CD4-positive, alpha-beta memory T cell (primary cell): ENCODE measurements at regions of chr6 and their contacts with region 1.

Region 1: DNA sequence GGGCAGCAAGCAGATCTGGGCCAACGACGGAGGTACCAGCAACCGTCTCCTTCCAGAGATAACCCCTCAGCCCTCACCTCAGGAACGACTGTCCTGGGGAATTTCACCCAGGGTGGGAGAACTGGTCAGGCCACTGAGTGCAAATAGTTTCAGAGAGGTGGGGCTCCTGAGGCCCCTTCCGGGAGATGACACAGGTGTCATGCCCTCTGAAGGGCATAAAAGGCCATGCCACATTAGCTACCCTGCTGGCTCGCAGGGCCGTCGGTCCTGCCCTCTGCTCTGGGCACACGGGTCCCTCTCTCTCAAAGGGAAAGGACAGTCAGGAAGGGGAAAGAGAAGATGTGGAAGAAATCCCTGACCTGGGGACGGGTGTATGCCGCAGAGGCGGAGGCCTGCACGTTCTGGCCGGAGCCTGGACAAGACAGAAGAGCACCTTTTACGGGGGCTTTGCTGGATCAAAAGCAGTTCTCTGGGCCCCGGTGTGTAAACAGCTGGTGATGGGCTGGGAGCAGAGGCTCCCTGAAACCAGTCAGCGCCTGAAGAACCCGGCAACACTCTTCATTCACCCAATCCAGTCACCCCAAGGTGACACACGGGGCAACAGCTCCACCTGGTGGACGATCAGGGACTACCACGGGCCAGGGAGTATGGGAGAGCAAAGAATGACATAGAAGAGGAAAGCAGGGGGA is 6.4 kb upstream of the TAF8 start:
- DNase-seq: peak; percentile 86 to 90 (median 89)
- H3K4me3 ChIP-seq: peak overlapping the region in 1 of 2 donors; percentile 49
- H3K4me3 Mint-ChIP-seq: peak overlapping the region; percentile 81 to 97 (median 86)
- H3K27ac ChIP-seq: peak overlapping the region; percentile 57
- H3K27ac Mint-ChIP-seq: peak overlapping the region; percentile 57 to 98 (median 90)
- H3K4me1 ChIP-seq: peaks cover 76% of the 10 kb centered on the region
- H3K4me1 Mint-ChIP-seq: peaks cover 42 to 92% (median 62%) of the 10 kb centered on the region in 4 donors
- H3K27me3 ChIP-seq: no peaks in the 10 kb centered on the region
- H3K27me3 Mint-ChIP-seq: no peaks in the 10 kb centered on the region

Region 2: GRCh38 chr6:41787219-41787917 is 256.6 kb before region 1 on chr6 and contains the start of gene TOMM6:
- CTCF ChIA-PET with region 1: interaction called, 178 read pairs
- POLR2A ChIA-PET with region 1: interaction called, 126 read pairs
- intact Hi-C with region 1: loop called (anchors 1 kb)
- DNase-seq: peak; percentile 93 to 95 (median 94)
- H3K4me3 ChIP-seq: peak within 1 kb of the TSS; percentile 84 to 100
- H3K4me3 Mint-ChIP-seq: peak within 1 kb of the TSS; percentile 95 to 99 (median 98)
- H3K27ac ChIP-seq: peak within 1 kb of the TSS; percentile 90
- H3K27ac Mint-ChIP-seq: peak within 1 kb of the TSS; percentile 92 to 98 (median 98)
- H3K4me1 ChIP-seq: peaks cover 16% of the 10 kb centered on the region
- H3K4me1 Mint-ChIP-seq: peaks cover 7 to 29% (median 12%) of the 10 kb centered on the region in 4 donors
- H3K27me3 ChIP-seq: no peaks in the 10 kb centered on the region
- H3K27me3 Mint-ChIP-seq: peaks cover 0 to 3% of the 10 kb centered on the region in 2 donors
- total RNA-seq, gene TOMM6: 118 to 126 TPM

Region 3: DNA sequence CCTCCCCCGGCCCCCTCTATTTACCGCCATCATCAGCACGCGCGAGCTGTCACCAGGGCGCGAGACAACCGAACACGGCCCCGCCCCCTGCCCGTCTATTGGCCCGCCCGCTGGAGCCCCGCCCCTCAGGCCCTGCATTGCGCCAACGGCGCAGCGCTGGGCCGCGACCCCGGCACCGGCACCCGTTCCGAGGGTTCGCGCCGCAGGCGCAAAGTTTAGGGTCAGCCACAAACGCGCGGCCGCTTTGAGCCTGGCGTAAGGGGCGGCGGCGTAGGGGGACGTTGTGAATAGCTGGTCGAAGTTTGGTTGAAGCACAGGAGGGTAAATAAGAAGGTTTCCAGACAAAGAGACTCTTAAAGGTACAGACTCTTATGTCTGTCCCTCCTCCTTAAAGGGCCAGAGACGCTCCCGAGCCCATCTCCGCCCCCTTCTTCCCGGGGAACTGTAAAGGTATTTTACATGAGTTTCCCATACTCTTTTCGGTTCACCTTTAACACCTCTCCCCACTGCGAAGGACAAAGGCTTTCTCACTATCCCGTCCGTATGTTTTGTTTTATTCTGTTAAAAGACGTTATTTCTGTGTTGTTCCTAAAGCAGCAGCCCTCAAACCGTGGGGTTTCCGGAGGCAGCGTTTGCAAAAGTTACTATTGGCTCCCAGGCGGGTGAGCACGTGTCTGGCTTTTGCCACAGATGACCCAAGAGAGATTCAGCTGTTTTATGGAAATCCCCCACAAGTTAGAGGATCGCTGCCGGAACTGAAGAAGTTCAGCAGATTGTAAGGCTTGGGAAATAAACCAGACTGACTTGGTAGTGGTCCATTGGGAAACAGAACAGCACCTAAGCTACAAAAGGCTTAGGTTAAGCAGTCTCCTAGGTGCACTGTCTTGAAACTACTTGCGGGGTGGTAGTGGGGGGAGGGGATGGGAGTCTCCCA is 148.4 kb before region 1 on chr6 and contains the start of gene USP49:
- CTCF ChIA-PET with region 1: interaction called, 27 read pairs
- POLR2A ChIA-PET with region 1: interaction called, 24 read pairs
- intact Hi-C with region 1: loop called (anchors 2 kb)
- DNase-seq: peak; percentile 86 to 92 (median 88)
- H3K4me3 ChIP-seq: peak within 1 kb of the TSS; percentile 74 to 91
- H3K4me3 Mint-ChIP-seq: peak within 1 kb of the TSS in 2 of 8 donors; percentile 90 to 98
- H3K27ac ChIP-seq: peak within 1 kb of the TSS; percentile 77
- H3K27ac Mint-ChIP-seq: peak within 1 kb of the TSS in 6 of 7 donors; percentile 79 to 94 (median 90)
- H3K4me1 ChIP-seq: peaks cover 23% of the 10 kb centered on the region
- H3K4me1 Mint-ChIP-seq: peaks cover 9 to 12% (median 10%) of the 10 kb centered on the region in 4 donors
- H3K27me3 ChIP-seq: no peaks in the 10 kb centered on the region
- H3K27me3 Mint-ChIP-seq: no peaks in the 10 kb centered on the region
- total RNA-seq, gene USP49: 1.8 to 2.4 TPM

Region 4: DNA sequence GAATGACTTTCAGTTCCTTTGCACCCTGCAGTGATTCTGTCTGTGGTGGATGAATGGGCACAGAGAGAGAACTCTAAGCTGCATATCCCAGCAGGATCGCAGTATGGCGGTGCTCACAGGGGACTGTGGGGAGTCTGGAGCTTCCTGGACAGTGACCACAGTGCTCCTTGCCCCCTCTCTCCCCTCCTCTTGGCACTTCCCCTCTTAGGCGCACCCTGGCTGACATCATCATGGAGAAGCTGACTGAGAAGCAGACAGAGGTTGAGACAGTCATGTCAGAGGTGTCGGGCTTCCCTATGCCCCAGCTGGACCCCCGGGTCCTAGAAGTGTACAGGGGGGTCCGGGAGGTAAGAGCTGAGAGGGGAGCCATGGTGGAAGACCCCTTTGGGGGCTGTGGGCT is 114.0 kb before region 1 on chr6:
- CTCF ChIA-PET with region 1: interaction called, 169 read pairs
- POLR2A ChIA-PET with region 1: interaction called, 280 read pairs
- intact Hi-C with region 1: no loop called
- DNase-seq: no peak
- H3K4me3 ChIP-seq: no peak overlapping the region
- H3K4me3 Mint-ChIP-seq: no peak overlapping the region
- H3K27ac ChIP-seq: no peak overlapping the region
- H3K27ac Mint-ChIP-seq: peak overlapping the region in 3 of 7 donors; percentile 11 to 63 (median 35)
- H3K4me1 ChIP-seq: peaks cover 16% of the 10 kb centered on the region
- H3K4me1 Mint-ChIP-seq: peaks cover 21 to 32% (median 25%) of the 10 kb centered on the region in 4 donors
- H3K27me3 ChIP-seq: no peaks in the 10 kb centered on the region
- H3K27me3 Mint-ChIP-seq: no peaks in the 10 kb centered on the region

Region 5: GRCh38 chr6:42009966-42010891 is 33.7 kb before region 1 on chr6:
- CTCF ChIA-PET with region 1: interaction called, 14 read pairs
- POLR2A ChIA-PET with region 1: interaction called, 9 read pairs
- intact Hi-C with region 1: no loop called
- DNase-seq: no peak
- H3K4me3 ChIP-seq: no peak overlapping the region
- H3K4me3 Mint-ChIP-seq: peak overlapping the region; percentile 48 to 84 (median 70)
- H3K27ac ChIP-seq: peak overlapping the region; percentile 51
- H3K27ac Mint-ChIP-seq: peak overlapping the region; percentile 73 to 93 (median 87)
- H3K4me1 ChIP-seq: peaks cover 64% of the 10 kb centered on the region
- H3K4me1 Mint-ChIP-seq: peaks cover 57 to 85% (median 69%) of the 10 kb centered on the region in 4 donors
- H3K27me3 ChIP-seq: no peaks in the 10 kb centered on the region
- H3K27me3 Mint-ChIP-seq: no peaks in the 10 kb centered on the region

Region 6: GRCh38 chr6:42104095-42104806 is 60.3 kb after region 1 on chr6:
- CTCF ChIA-PET with region 1: interaction called, 12 read pairs
- POLR2A ChIA-PET with region 1: interaction called, 10 read pairs
- intact Hi-C with region 1: loop called (anchors 1 kb)
- DNase-seq: peak; percentile 65 to 77 (median 73)
- H3K4me3 ChIP-seq: peak overlapping the region in 1 of 2 donors; percentile 53
- H3K4me3 Mint-ChIP-seq: peak overlapping the region; percentile 42 to 84 (median 70)
- H3K27ac ChIP-seq: no peak overlapping the region
- H3K27ac Mint-ChIP-seq: peak overlapping the region in 1 of 7 donors; percentile 42
- H3K4me1 ChIP-seq: peaks cover 6% of the 10 kb centered on the region
- H3K4me1 Mint-ChIP-seq: peaks cover 0 to 14% (median 6%) of the 10 kb centered on the region in 4 donors
- H3K27me3 ChIP-seq: no peaks in the 10 kb centered on the region
- H3K27me3 Mint-ChIP-seq: peaks cover 2 to 6% of the 10 kb centered on the region in 2 donors